ENCODE measurements at regions of chr5 and their contacts with region 1.

Region 1: GRCh38 chr5:132883261-132883834 is 9.9 kb downstream of the LEAP2 start:
- DNase-seq: no peak

Region 2: DNA sequence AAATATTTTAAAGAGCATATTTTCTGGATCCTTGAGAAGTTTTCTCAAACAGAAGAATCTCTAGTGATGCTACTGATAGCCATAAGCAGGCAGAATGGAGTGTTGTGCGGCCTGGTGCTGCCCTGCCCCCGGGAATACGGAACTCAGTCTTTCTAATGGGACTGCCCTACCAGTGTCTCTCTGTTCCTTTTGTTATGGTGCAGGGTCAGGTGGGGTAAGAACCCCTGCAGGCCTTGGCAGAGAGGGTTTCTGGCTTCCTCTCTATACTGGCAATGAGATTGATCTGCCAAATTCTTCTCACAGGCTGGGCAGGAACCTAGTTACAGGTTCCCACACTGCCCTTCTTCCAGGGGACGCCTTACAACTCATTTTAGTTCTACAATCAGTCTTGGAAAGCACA is 342.6 kb before region 1 on chr5:
- intact Hi-C with region 1: no loop called
- DNase-seq: no peak

Region 3: GRCh38 chr5:132829742-132830435 is 53.5 kb before region 1 on chr5:
- intact Hi-C with region 1: loop called (anchors 1 kb)
- DNase-seq: peak; percentile 89

Region 4: GRCh38 chr5:132841305-132842086 is 41.9 kb before region 1 on chr5:
- intact Hi-C with region 1: no loop called
- DNase-seq: no peak

Region 5: GRCh38 chr5:132979367-132979940 is 96.1 kb after region 1 on chr5:
- intact Hi-C with region 1: no loop called
- DNase-seq: no peak